AG04450 (cell line): ENCODE measurements at regions of chr17 and their contacts with region 1.

Region 1: GRCh38 chr17:50026901-50027630 is 28.8 kb upstream of the ITGA3 start:
- DNase-seq: no peak
- H3K4me3 ChIP-seq: peak overlapping the region; percentile 51
- H3K27ac ChIP-seq: peak overlapping the region; percentile 91
- H3K27me3 ChIP-seq: no peaks in the 10 kb centered on the region
- CTCF ChIP-seq: peak; percentile 90

Region 2: DNA sequence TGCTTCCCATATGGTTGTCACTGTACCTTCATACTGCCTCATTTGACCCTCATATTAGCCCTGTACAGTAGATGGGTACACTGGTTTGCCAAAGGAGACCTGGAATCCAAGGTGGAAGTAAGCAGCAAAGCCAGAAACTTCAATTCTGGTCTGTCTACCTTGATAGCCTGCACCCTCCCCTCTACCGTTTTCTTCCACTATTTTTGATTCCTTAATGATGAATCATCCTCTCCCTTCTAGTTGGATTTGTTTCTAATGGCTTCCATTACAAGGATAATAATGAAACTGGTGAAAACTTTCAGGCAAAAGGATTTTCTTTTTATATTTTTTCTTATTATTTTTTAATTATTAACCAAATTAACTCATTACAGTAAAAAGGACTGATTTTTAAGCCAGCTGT is 196.5 kb before region 1 on chr17:
- CTCF ChIA-PET with region 1: no interaction called
- POLR2A ChIA-PET with region 1: no interaction called
- DNase-seq: no peak
- H3K4me3 ChIP-seq: no peak overlapping the region
- H3K27ac ChIP-seq: no peak overlapping the region
- H3K27me3 ChIP-seq: no peaks in the 10 kb centered on the region
- CTCF ChIP-seq: no peak

Region 3: GRCh38 chr17:49861150-49861892 is 165.7 kb before region 1 on chr17:
- CTCF ChIA-PET with region 1: interaction called, 11 read pairs
- POLR2A ChIA-PET with region 1: no interaction called
- DNase-seq: no peak
- H3K4me3 ChIP-seq: no peak overlapping the region
- H3K27ac ChIP-seq: no peak overlapping the region
- H3K27me3 ChIP-seq: peaks cover 29% of the 10 kb centered on the region
- CTCF ChIP-seq: peak; percentile 87

Region 4: DNA sequence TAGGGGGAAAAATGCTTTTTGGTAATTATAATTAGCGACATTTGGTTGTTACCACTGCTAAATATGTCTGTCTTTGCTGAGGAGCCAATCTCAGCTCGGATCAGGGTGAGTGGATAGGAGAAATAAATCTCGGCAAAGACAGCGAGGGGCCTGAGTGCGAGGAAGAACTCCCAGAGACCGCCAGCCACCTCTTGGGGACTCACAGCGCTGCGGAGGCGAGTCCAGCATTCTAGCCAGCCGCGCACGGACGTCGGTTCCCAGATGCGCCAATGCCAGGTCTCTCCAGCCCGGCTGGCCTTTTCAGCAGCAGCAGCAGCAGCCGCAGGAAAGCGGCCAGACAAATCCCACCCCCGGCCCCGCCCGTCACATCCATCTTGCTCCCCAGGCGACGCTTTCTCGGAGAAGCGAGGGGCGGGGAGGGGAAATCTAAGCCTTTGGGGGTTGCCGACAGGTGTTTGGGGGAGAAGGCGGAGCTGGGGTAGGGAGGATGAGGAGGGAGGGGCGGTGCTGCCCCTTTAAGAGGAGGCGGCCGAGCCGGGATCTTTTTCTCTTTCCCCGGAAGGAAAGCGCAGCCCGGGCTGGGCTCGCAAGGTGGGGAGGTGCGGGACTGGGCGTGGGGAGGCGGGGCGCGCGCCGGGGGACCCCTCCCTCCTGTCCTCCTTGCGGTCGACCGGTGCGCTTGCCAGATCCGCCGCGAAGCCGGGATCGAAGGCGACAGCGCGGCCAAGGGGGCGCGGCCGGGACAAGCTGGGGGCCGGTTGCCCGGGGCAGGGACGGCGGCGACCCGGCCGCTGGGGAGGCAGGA is 28.6 kb after region 1 on chr17 and contains the start of gene ITGA3:
- CTCF ChIA-PET with region 1: interaction called, 11 read pairs
- POLR2A ChIA-PET with region 1: interaction called, 16 read pairs
- DNase-seq: no peak
- H3K4me3 ChIP-seq: peak within 1 kb of the TSS; percentile 77
- H3K27ac ChIP-seq: peak within 1 kb of the TSS; percentile 73
- H3K27me3 ChIP-seq: no peaks in the 10 kb centered on the region
- CTCF ChIP-seq: no peak
- polyA plus RNA-seq, gene ITGA3: 39.9 and 62.4 TPM in 2 replicates